ENCODE measurements at regions of chr3 and their contacts with region 1.

Region 1: GRCh38 chr3:151282921-151283320 is 4.6 kb upstream of the P2RY14 start:
- DNase-seq: peak in 7 of 9 donors; percentile 39 to 74 (median 68)
- ATAC-seq: peak; percentile 76
- H3K4me3 ChIP-seq: no peak overlapping the region
- H3K4me3 Mint-ChIP-seq: peak overlapping the region in 1 of 10 donors; percentile 41
- H3K27ac ChIP-seq: no peak overlapping the region
- H3K27ac Mint-ChIP-seq: peak overlapping the region in 1 of 9 donors; percentile 56
- H3K4me1 ChIP-seq: peaks cover 6 to 9% of the 10 kb centered on the region in 2 donors
- H3K4me1 Mint-ChIP-seq: peaks cover 7 to 57% (median 18%) of the 10 kb centered on the region in 7 donors
- H3K27me3 ChIP-seq: no peaks in the 10 kb centered on the region
- H3K27me3 Mint-ChIP-seq: no peaks in the 10 kb centered on the region

Region 2: GRCh38 chr3:150721285-150722130 is 561.4 kb before region 1 on chr3:
- CTCF ChIA-PET with region 1: no interaction called
- POLR2A ChIA-PET with region 1: no interaction called
- intact Hi-C with region 1: loop called in 1 of 2 experiments (anchors 1 kb)
- DNase-seq: peak in 7 of 9 donors; percentile 33 to 77 (median 70)
- ATAC-seq: peak; percentile 94
- H3K4me3 ChIP-seq: no peak overlapping the region
- H3K4me3 Mint-ChIP-seq: peak overlapping the region in 1 of 10 donors; percentile 3
- H3K27ac ChIP-seq: no peak overlapping the region
- H3K27ac Mint-ChIP-seq: no peak overlapping the region
- H3K4me1 ChIP-seq: no peaks in the 10 kb centered on the region
- H3K4me1 Mint-ChIP-seq: peaks cover 0 to 19% (median 9%) of the 10 kb centered on the region in 7 donors
- H3K27me3 ChIP-seq: no peaks in the 10 kb centered on the region
- H3K27me3 Mint-ChIP-seq: no peaks in the 10 kb centered on the region

Region 3: DNA sequence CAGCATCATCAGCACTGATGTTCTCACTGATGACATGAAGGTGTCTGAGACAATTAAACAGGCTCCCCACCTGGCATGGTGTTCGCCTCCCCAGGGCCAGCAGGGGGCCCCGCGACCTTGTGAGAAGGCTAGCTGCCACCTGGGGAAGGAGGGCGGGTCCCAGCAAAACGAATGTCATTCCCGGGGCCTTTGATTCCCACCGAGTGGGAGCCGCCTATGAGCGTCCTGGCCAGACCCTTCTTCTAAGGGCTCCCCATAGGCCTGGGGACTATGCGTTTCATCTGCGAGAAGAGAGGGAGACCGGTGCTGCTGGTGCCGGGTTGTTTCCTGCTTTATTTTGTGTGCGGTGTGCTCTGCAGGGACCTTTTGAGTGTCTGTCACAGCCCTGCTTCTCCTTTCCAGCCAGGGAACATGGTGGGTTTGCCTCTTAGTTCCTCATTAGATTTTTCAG is 357.1 kb before region 1 on chr3:
- CTCF ChIA-PET with region 1: interaction called, 3 read pairs
- POLR2A ChIA-PET with region 1: no interaction called
- intact Hi-C with region 1: loop called in 1 of 2 experiments (anchors 1 kb)
- DNase-seq: peak; percentile 11 to 52 (median 29)
- ATAC-seq: peak; percentile 72
- H3K4me3 ChIP-seq: no peak overlapping the region
- H3K4me3 Mint-ChIP-seq: peak overlapping the region in 9 of 10 donors; percentile 29 to 77 (median 57)
- H3K27ac ChIP-seq: no peak overlapping the region
- H3K27ac Mint-ChIP-seq: peak overlapping the region in 1 of 9 donors; percentile 41
- H3K4me1 ChIP-seq: no peaks in the 10 kb centered on the region
- H3K4me1 Mint-ChIP-seq: peaks cover 0 to 9% (median 7%) of the 10 kb centered on the region in 7 donors
- H3K27me3 ChIP-seq: no peaks in the 10 kb centered on the region
- H3K27me3 Mint-ChIP-seq: peaks cover 14 to 33% (median 17%) of the 10 kb centered on the region in 5 donors

Region 4: DNA sequence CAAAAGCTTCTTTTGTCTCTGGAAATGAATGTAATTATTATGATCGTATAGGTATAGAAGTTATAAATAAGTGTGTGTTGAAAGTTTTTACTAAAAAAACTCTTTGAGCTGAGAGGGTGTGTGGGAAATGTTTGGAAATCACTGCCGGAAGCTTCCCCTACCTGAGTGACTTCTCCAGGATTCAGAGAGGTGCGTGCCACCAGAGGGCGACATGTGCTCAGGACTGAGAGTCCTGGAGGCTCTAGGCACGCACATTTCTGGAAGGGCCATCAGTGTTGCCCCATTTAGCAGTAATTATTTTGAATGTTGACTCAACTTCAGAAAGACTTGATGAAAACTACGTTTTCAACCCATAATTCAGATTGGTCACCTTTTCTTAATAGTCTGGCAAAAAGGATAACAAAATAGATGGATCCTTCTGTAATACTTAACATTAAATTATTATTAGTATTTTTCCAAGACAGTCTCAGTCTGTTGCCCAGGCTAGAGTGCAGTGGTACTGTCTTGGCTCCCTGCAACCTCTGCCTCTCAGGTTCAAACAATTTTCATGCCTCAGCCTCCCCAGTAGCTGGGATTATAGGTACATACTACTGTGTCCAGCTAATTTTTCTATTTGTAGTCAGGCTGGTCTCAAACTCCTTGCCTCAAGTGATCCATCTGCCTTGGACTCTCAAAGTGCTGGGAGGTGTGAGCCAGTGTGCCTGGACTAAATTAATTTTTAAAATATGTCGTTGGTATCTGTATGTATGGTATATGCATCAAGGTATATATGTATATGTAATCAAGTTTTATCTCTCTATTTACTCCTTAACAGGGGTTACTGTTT is 114.4 kb before region 1 on chr3:
- CTCF ChIA-PET with region 1: interaction called, 107 read pairs
- POLR2A ChIA-PET with region 1: interaction called, 5 read pairs
- intact Hi-C with region 1: loop called (anchors 1 kb)
- DNase-seq: peak; percentile 55 to 79 (median 68)
- ATAC-seq: peak; percentile 77
- H3K4me3 ChIP-seq: no peak overlapping the region
- H3K4me3 Mint-ChIP-seq: no peak overlapping the region
- H3K27ac ChIP-seq: no peak overlapping the region
- H3K27ac Mint-ChIP-seq: peak overlapping the region in 1 of 9 donors; percentile 31
- H3K4me1 ChIP-seq: peaks cover 24 to 30% of the 10 kb centered on the region in 2 donors
- H3K4me1 Mint-ChIP-seq: peaks cover 28 to 48% (median 40%) of the 10 kb centered on the region in 7 donors
- H3K27me3 ChIP-seq: no peaks in the 10 kb centered on the region
- H3K27me3 Mint-ChIP-seq: no peaks in the 10 kb centered on the region

Region 5: DNA sequence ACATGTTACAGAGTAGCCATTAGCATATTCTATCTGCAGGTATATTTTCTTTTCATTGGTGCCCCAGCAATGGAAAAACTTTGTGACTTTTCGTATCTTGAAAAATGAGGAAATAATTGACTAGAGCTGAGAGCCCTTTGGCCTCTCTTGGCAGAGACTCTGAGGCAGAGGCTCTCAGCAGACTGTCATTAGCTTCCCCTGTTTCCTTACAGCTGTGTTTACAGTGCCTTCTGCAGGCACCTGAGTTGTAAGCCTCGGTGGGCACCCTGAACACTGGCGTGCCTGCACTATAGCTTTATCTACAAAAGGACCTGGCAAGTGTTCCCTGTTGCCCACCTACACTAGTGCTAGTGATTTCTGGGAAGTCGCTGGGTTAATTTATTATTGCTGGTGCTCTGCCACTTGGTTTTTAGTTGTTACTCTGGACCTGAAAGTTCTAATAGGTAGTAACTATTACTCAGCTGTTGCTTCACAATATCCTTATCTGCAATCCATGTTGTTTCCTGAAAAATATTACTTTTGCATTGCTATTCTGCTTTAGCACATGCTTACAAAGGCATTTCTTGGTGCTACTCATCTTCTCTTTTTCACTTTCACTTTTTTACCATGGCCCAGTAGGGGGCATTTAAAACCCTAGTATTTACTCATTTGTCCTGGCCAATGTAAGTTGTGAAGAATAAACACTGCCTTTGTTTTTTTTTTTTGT is 72.1 kb before region 1 on chr3:
- CTCF ChIA-PET with region 1: interaction called, 9 read pairs
- POLR2A ChIA-PET with region 1: interaction called, 3 read pairs
- intact Hi-C with region 1: loop called (anchors 1 kb)
- DNase-seq: no peak
- ATAC-seq: peak; percentile 49
- H3K4me3 ChIP-seq: no peak overlapping the region
- H3K4me3 Mint-ChIP-seq: peak overlapping the region; percentile 6 to 83 (median 62)
- H3K27ac ChIP-seq: no peak overlapping the region
- H3K27ac Mint-ChIP-seq: peak overlapping the region; percentile 77 to 93 (median 83)
- H3K4me1 ChIP-seq: peaks cover 24 to 31% of the 10 kb centered on the region in 2 donors
- H3K4me1 Mint-ChIP-seq: peaks cover 18 to 54% (median 46%) of the 10 kb centered on the region in 7 donors
- H3K27me3 ChIP-seq: no peaks in the 10 kb centered on the region
- H3K27me3 Mint-ChIP-seq: no peaks in the 10 kb centered on the region

Region 6: GRCh38 chr3:151327571-151328198 is 44.8 kb after region 1 on chr3:
- CTCF ChIA-PET with region 1: no interaction called
- POLR2A ChIA-PET with region 1: no interaction called
- intact Hi-C with region 1: loop called (anchors 5 kb)
- DNase-seq: no peak
- ATAC-seq: no peak
- H3K4me3 ChIP-seq: no peak overlapping the region
- H3K4me3 Mint-ChIP-seq: no peak overlapping the region
- H3K27ac ChIP-seq: no peak overlapping the region
- H3K27ac Mint-ChIP-seq: no peak overlapping the region
- H3K4me1 ChIP-seq: no peaks in the 10 kb centered on the region
- H3K4me1 Mint-ChIP-seq: peaks cover 4 to 7% (median 6%) of the 10 kb centered on the region in 7 donors
- H3K27me3 ChIP-seq: no peaks in the 10 kb centered on the region
- H3K27me3 Mint-ChIP-seq: peaks cover 10 to 30% (median 19%) of the 10 kb centered on the region in 5 donors

Region 7: GRCh38 chr3:151918253-151919029 is 635.5 kb after region 1 on chr3:
- CTCF ChIA-PET with region 1: no interaction called
- POLR2A ChIA-PET with region 1: no interaction called
- intact Hi-C with region 1: loop called in 1 of 2 experiments (anchors 1 kb)
- DNase-seq: peak in 5 of 9 donors; percentile 11 to 40 (median 21)
- ATAC-seq: peak; percentile 57
- H3K4me3 ChIP-seq: no peak overlapping the region
- H3K4me3 Mint-ChIP-seq: no peak overlapping the region
- H3K27ac ChIP-seq: no peak overlapping the region
- H3K27ac Mint-ChIP-seq: no peak overlapping the region
- H3K4me1 ChIP-seq: no peaks in the 10 kb centered on the region
- H3K4me1 Mint-ChIP-seq: no peaks in the 10 kb centered on the region
- H3K27me3 ChIP-seq: no peaks in the 10 kb centered on the region
- H3K27me3 Mint-ChIP-seq: peaks cover 0 to 7% (median 0%) of the 10 kb centered on the region in 5 donors